Testis (tissue), 5 donors: ENCODE measurements at regions of chr16 and their contacts with region 1.

Region 1: DNA sequence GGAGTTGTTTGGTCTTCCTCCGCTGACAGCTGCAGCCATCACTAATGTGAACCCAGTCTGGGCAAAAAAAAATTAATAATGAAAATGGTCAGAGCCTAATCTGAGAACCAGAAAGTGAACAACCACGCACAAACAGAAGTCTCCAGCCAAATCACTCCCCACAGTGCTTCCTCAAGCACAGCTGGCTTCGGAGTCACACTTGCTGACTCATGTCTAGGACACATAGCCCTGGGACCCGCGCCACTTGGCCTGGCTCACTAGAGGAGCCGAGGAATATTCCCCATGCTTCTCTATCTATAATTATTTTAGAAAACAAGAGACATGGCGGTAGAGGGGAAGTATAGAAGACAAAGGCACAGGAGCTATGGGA is 109.1 kb downstream of the ZFHX3 start:
- DNase-seq: peak; percentile 89
- H3K4me3 ChIP-seq: no peak overlapping the region
- H3K27ac ChIP-seq: peak overlapping the region in 1 of 2 donors; percentile 82
- H3K4me1 ChIP-seq: peaks cover 8% of the 10 kb centered on the region
- H3K27me3 ChIP-seq: no peaks in the 10 kb centered on the region
- CTCF ChIP-seq: no peak
- POLR2A ChIP-seq: no peak

Region 2: GRCh38 chr16:72818236-72818845 is 120.4 kb before region 1 on chr16:
- intact Hi-C with region 1: no loop called
- DNase-seq: no peak
- H3K4me3 ChIP-seq: no peak overlapping the region
- H3K27ac ChIP-seq: no peak overlapping the region
- H3K4me1 ChIP-seq: no peaks in the 10 kb centered on the region
- H3K27me3 ChIP-seq: no peaks in the 10 kb centered on the region
- CTCF ChIP-seq: no peak
- POLR2A ChIP-seq: no peak

Region 3: DNA sequence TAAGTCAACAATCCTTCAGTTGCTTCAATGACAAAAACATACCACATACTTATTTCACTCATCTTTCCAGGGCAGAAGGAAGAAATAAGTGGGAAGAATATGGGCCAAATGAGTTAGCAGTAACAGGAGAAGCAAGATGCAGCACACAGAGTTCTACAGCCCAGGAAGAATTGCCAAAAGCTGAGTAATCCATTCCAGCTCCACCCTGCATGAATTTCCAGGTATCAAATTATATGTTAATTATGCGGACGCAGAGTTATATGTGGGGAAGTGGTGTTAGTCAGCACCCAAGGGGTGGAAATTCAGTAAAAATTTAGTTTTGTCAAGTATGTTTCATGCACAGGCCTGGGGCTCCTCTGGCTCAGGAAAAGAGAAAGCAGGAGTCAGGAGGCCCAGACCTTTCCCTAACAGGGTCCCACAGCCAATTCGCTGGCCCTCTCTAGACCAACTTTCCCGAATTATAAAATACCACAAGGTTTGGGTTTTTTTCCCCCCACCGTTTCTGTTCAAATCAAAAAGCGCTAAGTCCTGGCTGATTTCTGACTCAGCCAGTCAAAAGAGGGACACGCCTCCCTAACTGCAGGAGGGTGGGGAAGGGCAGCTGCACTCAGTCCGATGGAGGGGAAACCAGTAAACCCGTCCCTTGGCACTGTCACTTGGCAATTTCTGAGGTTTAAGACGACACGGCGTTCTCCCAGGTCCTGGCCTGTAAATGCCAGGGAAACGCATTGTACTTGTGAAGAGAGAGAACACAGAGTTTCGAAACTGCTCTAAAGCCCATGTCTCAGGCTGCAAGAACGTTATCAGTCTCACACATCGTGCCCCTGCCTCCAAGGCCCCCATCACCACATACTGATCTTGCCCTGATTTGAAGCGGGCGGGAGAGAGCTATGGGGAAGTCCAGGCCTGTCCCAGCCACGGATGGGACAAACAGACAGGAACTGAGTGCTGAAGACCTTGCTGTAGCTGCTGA is 51.1 kb after region 1 on chr16:
- intact Hi-C with region 1: loop called (anchors 10 kb)
- DNase-seq: peak; percentile 55
- H3K4me3 ChIP-seq: no peak overlapping the region
- H3K27ac ChIP-seq: peak overlapping the region; percentile 24 to 79
- H3K4me1 ChIP-seq: peaks cover 26% of the 10 kb centered on the region
- H3K27me3 ChIP-seq: no peaks in the 10 kb centered on the region
- CTCF ChIP-seq: no peak
- POLR2A ChIP-seq: no peak

Region 4: DNA sequence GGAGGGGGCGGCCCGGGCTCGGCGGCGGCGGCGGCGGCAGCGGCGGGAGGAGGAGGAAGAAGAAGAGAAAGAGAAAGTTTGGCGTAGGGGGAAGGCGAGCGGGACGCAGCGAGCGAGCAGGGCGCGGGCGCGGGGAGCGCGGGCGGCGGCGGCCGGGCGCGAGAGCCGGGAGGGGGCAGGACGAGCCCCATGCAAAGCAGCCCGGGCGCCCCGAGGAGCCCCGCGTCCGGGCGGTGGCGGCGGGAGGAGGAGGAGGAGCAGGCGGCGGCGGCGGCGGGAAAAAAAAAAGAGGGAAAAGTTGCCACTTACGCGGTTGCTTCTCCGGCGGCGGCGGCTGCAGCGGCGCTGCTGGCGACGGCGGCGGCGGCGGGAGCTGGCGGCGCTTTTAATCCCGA is 119.4 kb after region 1 on chr16:
- intact Hi-C with region 1: loop called (anchors 5 kb)
- DNase-seq: no peak
- H3K4me3 ChIP-seq: peak overlapping the region; percentile 76 to 80
- H3K27ac ChIP-seq: peak overlapping the region; percentile 65 to 94
- H3K4me1 ChIP-seq: peaks cover 12% of the 10 kb centered on the region
- H3K27me3 ChIP-seq: no peaks in the 10 kb centered on the region
- CTCF ChIP-seq: no peak
- POLR2A ChIP-seq: no peak